ENCODE measurements at regions of chr12 and their contacts with region 1.

Region 1: GRCh38 chr12:108691175-108691997 is 39.9 kb downstream of the CORO1C start:
- DNase-seq: peak; percentile 86
- ATAC-seq: peak; percentile 96
- H3K4me3 ChIP-seq: peak overlapping the region in 1 of 2 experiments; percentile 18; a peak in 1 of 4 replicates
- H3K27ac ChIP-seq: peak overlapping the region; percentile 24; the same call in 1 of the 2 replicates
- H3K4me1 ChIP-seq: peaks cover 36 to 42% of the 10 kb centered on the region in 2 experiments
- H3K27me3 ChIP-seq: no peaks in the 10 kb centered on the region
- CTCF ChIP-seq: peak in 1 of 3 experiments; percentile 28; a peak in 3 of 6 replicates
- POLR2A ChIP-seq: no peak
- RAD21 ChIP-seq: 0 out of 2 replicates have a peak, but pooled peaks have one; percentile 16

Region 2: DNA sequence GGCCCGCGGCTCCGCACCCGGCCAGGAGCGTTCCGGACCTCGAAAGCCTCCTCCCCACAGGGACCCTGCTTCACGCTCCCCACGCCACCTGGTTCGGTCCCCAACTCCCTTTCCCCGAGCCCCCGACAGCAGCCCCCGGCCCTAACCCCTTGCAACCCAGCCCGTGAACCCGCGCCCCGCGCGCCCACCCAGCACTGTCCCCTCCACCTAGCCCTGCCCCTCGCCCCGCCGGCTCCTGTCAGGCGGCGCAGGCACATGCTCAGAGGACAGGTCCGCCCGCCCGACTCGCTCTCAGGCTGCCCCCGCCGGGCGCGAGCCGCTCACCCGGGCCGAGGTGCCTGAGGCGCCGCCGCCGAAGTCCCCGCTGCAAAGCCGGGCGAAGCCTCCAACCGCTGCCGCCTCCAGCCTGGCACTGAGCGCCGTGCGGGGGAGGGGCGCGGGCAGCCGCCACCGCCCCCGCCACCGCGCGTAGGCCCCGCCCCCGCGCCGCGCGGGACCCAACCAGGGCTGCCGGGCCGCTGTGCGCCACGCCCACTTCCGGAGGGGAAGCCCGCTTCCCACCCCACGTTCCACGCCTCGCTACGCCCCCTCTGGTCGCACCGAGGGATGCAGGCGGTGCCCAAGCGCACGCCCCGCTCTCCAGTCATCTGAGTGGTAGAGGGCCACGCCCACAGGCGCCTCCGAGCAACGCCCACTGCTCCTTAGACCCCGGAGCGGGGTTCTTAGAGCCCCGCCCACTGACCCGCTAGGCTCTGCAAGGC is 39.9 kb after region 1 on chr12 and contains the start of gene CORO1C:
- CTCF ChIA-PET with region 1: no interaction called
- POLR2A ChIA-PET with region 1: interaction called, 8 read pairs
- RAD21 ChIA-PET with region 1: no interaction called
- intact Hi-C with region 1: loop called (anchors 5 kb)
- DNase-seq: peak; percentile 92
- ATAC-seq: peak; percentile 79
- H3K4me3 ChIP-seq: peak within 1 kb of the TSS; percentile 71 to 85
- H3K27ac ChIP-seq: peak within 1 kb of the TSS; percentile 78
- H3K4me1 ChIP-seq: peaks cover 32 to 59% of the 10 kb centered on the region in 2 experiments
- H3K27me3 ChIP-seq: no peaks in the 10 kb centered on the region
- CTCF ChIP-seq: peak in 2 of 3 experiments; percentile 69 to 80; a peak in 4 of 6 replicates
- POLR2A ChIP-seq: peak; percentile 59
- RAD21 ChIP-seq: peak; percentile 44; the same call in 1 of the 2 replicates
- total RNA-seq, gene CORO1C: 138 TPM

Region 3: GRCh38 chr12:109016016-109016415 is 324.6 kb after region 1 on chr12:
- CTCF ChIA-PET with region 1: no interaction called
- POLR2A ChIA-PET with region 1: no interaction called
- RAD21 ChIA-PET with region 1: no interaction called
- intact Hi-C with region 1: no loop called
- DNase-seq: no peak
- ATAC-seq: no peak
- H3K4me3 ChIP-seq: no peak overlapping the region
- H3K27ac ChIP-seq: no peak overlapping the region
- H3K4me1 ChIP-seq: peaks cover 0 to 2% of the 10 kb centered on the region in 2 experiments; a peak in 1 of 4 replicates
- H3K27me3 ChIP-seq: peaks cover 50% of the 10 kb centered on the region
- CTCF ChIP-seq: no peak
- POLR2A ChIP-seq: no peak
- RAD21 ChIP-seq: no peak

Measured in HCT116 (cell line).